Activated CD8-positive, alpha-beta T cell treated with anti-CD3 and anti-CD28 coated beads, Interleukin-2, amount 10 ng/mL, durations not matched to agents 7 days and 5 days (primary cell): ENCODE measurements at regions of chr12 and their contacts with region 1.

Region 1: DNA sequence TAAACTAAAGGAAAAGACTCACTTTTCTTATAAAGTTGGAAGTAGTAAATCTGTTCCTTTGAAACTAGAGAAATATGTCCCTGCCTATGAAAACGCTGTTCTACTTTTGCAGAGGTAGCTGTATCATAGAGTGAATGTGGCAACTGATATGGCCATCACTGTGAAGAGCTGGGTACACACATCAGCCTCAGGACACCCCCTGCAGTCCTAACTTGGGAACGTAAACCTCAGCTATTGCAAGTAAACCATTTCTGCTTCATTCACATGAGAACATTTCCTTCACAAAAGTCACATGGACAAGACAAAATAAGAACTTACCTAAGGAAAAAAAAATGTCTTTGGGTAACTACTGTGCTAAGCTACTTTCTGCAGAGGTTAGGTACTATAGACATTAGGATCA is 233.3 kb upstream of the PPFIA2 start:
- DNase-seq: peak; percentile 66
- ATAC-seq: peak; percentile 90
- H3K4me3 Mint-ChIP-seq: no peak overlapping the region
- H3K27ac Mint-ChIP-seq: no peak overlapping the region
- H3K4me1 Mint-ChIP-seq: peaks cover 3% of the 10 kb centered on the region
- H3K27me3 Mint-ChIP-seq: no peaks in the 10 kb centered on the region

Region 2: GRCh38 chr12:81644503-81644902 is 348.0 kb before region 1 on chr12:
- CTCF ChIA-PET with region 1: interaction called, 21 read pairs
- POLR2A ChIA-PET with region 1: no interaction called
- DNase-seq: no peak
- ATAC-seq: no peak
- H3K4me3 Mint-ChIP-seq: no peak overlapping the region
- H3K27ac Mint-ChIP-seq: no peak overlapping the region
- H3K4me1 Mint-ChIP-seq: no peaks in the 10 kb centered on the region
- H3K27me3 Mint-ChIP-seq: peaks cover 3% of the 10 kb centered on the region